Activated CD4-positive, alpha-beta memory T cell treated with anti-CD3 and anti-CD28 coated beads for 36 hours (primary cell): ENCODE measurements at regions of chrX and their contacts with region 1.

Region 1: DNA sequence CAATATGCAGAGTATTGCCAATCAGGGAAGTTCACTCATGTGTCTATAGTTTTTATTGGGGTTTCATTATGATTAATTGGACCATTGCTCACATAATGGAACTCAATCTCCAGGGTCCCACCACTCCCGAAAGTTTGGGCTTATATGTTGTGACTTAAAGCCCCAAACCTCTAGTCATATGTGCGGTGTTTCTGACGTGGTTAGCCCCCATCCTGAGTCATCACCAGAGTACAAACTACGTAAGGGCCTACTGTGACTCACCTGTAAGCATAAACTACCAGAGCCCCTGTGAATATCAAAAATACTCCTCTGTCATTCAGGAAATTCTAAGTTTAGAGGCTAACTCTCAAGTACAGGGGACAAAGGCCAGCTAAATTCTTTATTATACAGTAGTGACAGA is 5.4 kb downstream of the YIPF6 start:
- DNase-seq: peak; percentile 83
- H3K4me3 Mint-ChIP-seq: no peak overlapping the region
- H3K27ac Mint-ChIP-seq: peak overlapping the region; percentile 85
- H3K4me1 Mint-ChIP-seq: peaks cover 64% of the 10 kb centered on the region
- H3K27me3 Mint-ChIP-seq: no peaks in the 10 kb centered on the region

Region 2: DNA sequence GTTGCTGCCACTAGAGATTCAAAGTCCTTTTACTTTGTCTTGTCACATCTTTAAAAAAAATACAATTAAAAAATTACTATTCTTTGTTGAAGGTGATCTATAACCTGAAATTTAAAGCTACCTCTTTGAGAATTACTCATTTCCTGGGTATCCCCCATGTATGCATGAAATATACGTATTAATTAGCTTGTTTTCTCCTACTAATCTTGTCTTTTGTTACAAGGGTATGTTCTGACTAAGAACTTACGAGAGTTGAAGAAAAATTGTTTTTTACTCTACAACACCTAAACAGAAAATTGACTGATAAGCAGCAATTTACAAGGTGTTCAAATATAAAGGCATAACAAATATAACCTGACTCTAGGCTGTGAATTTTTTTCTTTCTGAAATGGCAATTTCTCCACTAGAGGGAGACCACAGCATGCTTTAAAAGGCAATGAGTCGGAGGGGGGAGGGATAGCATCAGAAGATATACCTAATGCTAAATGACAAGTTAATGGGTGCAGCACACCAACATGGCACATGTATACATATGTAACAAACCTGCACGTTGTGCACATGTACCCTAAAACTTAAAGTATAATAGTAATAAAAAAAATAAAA is 320.5 kb before region 1 on chrX:
- CTCF ChIA-PET with region 1: no interaction called
- POLR2A ChIA-PET with region 1: no interaction called
- intact Hi-C with region 1: loop called (anchors 1 kb)
- DNase-seq: no peak
- H3K4me3 Mint-ChIP-seq: no peak overlapping the region
- H3K27ac Mint-ChIP-seq: no peak overlapping the region
- H3K4me1 Mint-ChIP-seq: peaks cover 38% of the 10 kb centered on the region
- H3K27me3 Mint-ChIP-seq: no peaks in the 10 kb centered on the region

Region 3: GRCh38 chrX:68571610-68572311 is 67.5 kb after region 1 on chrX:
- CTCF ChIA-PET with region 1: no interaction called
- POLR2A ChIA-PET with region 1: no interaction called
- intact Hi-C with region 1: loop called (anchors 1 kb)
- DNase-seq: peak; percentile 35
- H3K4me3 Mint-ChIP-seq: no peak overlapping the region
- H3K27ac Mint-ChIP-seq: peak overlapping the region; percentile 47
- H3K4me1 Mint-ChIP-seq: peaks cover 48% of the 10 kb centered on the region
- H3K27me3 Mint-ChIP-seq: no peaks in the 10 kb centered on the region

Region 4: GRCh38 chrX:68588602-68589371 is 84.5 kb after region 1 on chrX:
- CTCF ChIA-PET with region 1: no interaction called
- POLR2A ChIA-PET with region 1: no interaction called
- intact Hi-C with region 1: no loop called
- DNase-seq: no peak
- H3K4me3 Mint-ChIP-seq: no peak overlapping the region
- H3K27ac Mint-ChIP-seq: no peak overlapping the region
- H3K4me1 Mint-ChIP-seq: no peaks in the 10 kb centered on the region
- H3K27me3 Mint-ChIP-seq: no peaks in the 10 kb centered on the region

Region 5: GRCh38 chrX:68686097-68686977 is 182.1 kb after region 1 on chrX:
- CTCF ChIA-PET with region 1: no interaction called
- POLR2A ChIA-PET with region 1: no interaction called
- intact Hi-C with region 1: loop called (anchors 10 kb)
- DNase-seq: peak; percentile 44
- H3K4me3 Mint-ChIP-seq: peak overlapping the region; percentile 61
- H3K27ac Mint-ChIP-seq: no peak overlapping the region
- H3K4me1 Mint-ChIP-seq: peaks cover 23% of the 10 kb centered on the region
- H3K27me3 Mint-ChIP-seq: peaks cover 10% of the 10 kb centered on the region

Region 6: DNA sequence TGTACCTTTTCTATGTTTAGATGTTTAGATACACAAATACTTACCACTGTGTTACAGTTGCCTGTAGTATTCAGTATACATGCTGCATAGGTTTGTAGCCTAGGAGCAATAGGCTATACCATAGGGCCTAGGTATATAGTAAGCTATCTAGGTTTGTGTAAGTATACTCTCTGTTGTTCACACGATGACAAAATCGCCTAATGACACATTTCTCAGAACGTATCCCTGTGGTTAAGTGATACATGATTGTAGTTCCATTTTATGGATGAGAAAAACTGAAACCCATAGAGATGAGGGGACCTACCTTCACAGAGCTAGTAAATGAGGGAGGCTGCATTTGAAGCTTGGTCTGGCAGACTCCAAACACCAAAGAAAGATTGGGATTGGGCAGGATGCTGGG is 245.2 kb after region 1 on chrX:
- CTCF ChIA-PET with region 1: no interaction called
- POLR2A ChIA-PET with region 1: no interaction called
- intact Hi-C with region 1: loop called (anchors 1 kb)
- DNase-seq: no peak
- H3K4me3 Mint-ChIP-seq: no peak overlapping the region
- H3K27ac Mint-ChIP-seq: peak overlapping the region; percentile 45
- H3K4me1 Mint-ChIP-seq: peaks cover 25% of the 10 kb centered on the region
- H3K27me3 Mint-ChIP-seq: no peaks in the 10 kb centered on the region

Region 7: GRCh38 chrX:69165087-69165651 is 660.9 kb after region 1 on chrX and contains the start of gene PJA1:
- CTCF ChIA-PET with region 1: no interaction called
- POLR2A ChIA-PET with region 1: no interaction called
- intact Hi-C with region 1: loop called (anchors 10 kb)
- DNase-seq: peak; percentile 81
- H3K4me3 Mint-ChIP-seq: peak within 1 kb of the TSS; percentile 73
- H3K27ac Mint-ChIP-seq: peak within 1 kb of the TSS; percentile 81
- H3K4me1 Mint-ChIP-seq: peaks cover 36% of the 10 kb centered on the region
- H3K27me3 Mint-ChIP-seq: no peaks in the 10 kb centered on the region
- total RNA-seq, gene PJA1: 20.7 to 22.1 TPM

Region 8: DNA sequence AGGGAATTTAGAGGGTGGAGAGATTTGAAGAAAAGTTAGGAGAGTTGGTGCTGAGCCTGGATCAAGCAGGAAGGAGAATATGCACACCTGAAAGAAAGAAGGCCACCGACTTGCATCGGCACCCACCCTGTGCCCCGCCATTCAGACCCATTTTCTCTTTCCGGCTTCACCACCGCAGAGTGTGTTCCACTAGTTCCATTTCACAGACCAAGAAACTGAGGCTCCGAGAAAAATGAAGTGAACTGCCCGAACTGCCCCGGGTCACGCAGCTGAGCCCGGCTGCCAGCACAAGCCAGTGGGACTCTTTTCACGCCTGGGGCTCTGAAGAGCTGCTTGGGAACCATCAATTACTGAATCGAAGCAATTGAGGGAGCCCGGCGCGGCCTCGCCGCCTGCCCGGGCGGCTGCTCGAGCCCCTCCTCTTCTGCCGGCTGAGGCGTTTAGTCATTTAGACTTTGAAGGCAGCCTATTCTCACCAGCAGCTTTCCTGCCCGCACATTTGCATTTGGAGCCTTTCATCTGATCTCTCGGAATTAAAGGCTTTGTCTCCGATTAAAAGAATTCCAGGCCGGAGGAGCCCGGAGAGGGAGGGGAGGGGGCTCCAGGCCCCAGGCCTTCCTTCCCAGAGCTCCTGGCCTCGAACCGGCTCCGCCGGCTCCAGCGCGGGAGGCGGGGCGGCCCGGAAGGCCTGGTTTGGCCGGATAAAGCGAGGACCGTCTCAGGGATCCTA is 801.3 kb after region 1 on chrX:
- CTCF ChIA-PET with region 1: no interaction called
- POLR2A ChIA-PET with region 1: no interaction called
- intact Hi-C with region 1: no loop called
- DNase-seq: peak; percentile 9
- H3K4me3 Mint-ChIP-seq: no peak overlapping the region
- H3K27ac Mint-ChIP-seq: no peak overlapping the region
- H3K4me1 Mint-ChIP-seq: no peaks in the 10 kb centered on the region
- H3K27me3 Mint-ChIP-seq: peaks cover 8% of the 10 kb centered on the region

Region 9: DNA sequence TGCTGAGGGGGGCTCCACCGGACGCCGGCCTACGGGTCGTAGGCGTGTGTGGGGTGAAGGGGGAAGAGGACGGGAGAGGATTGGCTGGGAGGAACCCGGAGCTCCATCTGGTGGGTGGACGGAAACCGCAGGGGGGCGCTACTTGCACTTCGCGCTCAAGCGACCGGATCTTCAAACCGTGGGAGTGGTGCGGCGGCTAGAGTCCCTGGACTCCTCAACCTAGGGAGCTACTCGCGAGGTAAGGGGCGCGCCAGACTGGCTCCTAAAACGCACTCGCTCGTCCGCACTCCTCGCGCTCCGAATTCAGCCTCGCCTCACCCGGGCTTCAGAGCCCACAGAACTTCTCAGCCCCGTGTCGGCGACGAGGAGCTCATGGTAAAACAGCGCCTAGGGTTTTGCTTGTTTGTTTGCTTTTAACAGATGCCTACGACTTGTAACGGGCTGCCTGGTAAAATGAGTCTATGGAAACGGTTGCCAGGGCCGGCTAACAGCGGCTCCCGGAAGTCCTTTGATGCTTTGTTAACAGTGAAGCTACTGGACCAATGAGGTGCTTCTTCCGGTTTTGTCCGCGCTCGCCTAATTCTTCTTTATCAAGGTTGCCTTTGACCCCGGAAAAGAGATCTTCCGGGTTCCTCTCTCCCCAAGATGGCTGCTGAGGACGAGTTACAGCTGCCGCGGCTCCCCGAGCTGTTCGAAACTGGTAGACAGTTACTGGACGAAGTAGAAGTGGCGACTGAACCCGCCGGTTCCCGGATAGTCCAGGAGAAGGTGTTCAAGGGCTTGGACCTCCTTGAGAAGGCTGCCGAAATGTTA is 1629.3 kb after region 1 on chrX and contains the start of gene IGBP1:
- CTCF ChIA-PET with region 1: no interaction called
- POLR2A ChIA-PET with region 1: no interaction called
- intact Hi-C with region 1: loop called (anchors 10 kb)
- DNase-seq: peak; percentile 85
- H3K4me3 Mint-ChIP-seq: peak within 1 kb of the TSS; percentile 98
- H3K27ac Mint-ChIP-seq: peak within 1 kb of the TSS; percentile 96
- H3K4me1 Mint-ChIP-seq: peaks cover 24% of the 10 kb centered on the region
- H3K27me3 Mint-ChIP-seq: no peaks in the 10 kb centered on the region
- total RNA-seq, gene IGBP1: 50.8 to 51.5 TPM